Ascending aorta (tissue), 2 donors: ENCODE measurements at regions of chr1 and their contacts with region 1.

Region 1: GRCh38 chr1:222814536-222815439 is at the start of gene DISP1:
- DNase-seq: peak in 1 of 2 donors; percentile 91
- H3K4me3 ChIP-seq: peak within 1 kb of the TSS; percentile 61 to 95
- H3K27ac ChIP-seq: peak within 1 kb of the TSS; percentile 91 to 100
- H3K4me1 ChIP-seq: peaks cover 4 to 13% of the 10 kb centered on the region in 2 donors
- H3K27me3 ChIP-seq: no peaks in the 10 kb centered on the region
- CTCF ChIP-seq: no peak
- total RNA-seq, gene DISP1: 23.2 TPM

Region 2: DNA sequence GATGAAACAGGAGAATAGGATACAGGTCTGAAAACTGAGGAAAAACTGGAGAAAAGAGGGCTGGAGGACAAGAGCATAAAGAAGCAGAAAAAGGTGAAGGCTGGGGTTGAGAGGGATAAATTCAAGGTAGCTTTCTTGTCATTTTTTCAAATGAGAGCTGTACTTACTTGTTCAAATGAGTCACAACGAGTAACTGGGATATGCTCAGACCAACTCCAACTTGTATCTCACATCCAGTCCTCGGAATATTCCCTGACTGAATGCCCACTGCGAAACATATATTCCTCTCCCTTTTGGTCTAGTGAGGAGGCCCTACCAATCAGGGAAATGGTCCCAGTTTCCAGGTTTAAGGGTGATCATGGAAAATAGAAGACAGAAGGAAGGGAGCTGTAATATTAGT is 610.3 kb before region 1 on chr1:
- intact Hi-C with region 1: no loop called
- DNase-seq: no peak
- H3K4me3 ChIP-seq: no peak overlapping the region
- H3K27ac ChIP-seq: no peak overlapping the region
- H3K4me1 ChIP-seq: no peaks in the 10 kb centered on the region
- H3K27me3 ChIP-seq: no peaks in the 10 kb centered on the region
- CTCF ChIP-seq: no peak

Region 3: GRCh38 chr1:222713091-222713961 is 101.5 kb before region 1 on chr1:
- intact Hi-C with region 1: loop called (anchors 1 kb)
- DNase-seq: peak; percentile 87 to 96
- H3K4me3 ChIP-seq: peak overlapping the region; percentile 80 to 89
- H3K27ac ChIP-seq: peak overlapping the region; percentile 96 to 99
- H3K4me1 ChIP-seq: peaks cover 0 to 15% of the 10 kb centered on the region in 2 donors
- H3K27me3 ChIP-seq: no peaks in the 10 kb centered on the region
- CTCF ChIP-seq: no peak

Region 4: GRCh38 chr1:222754366-222755139 is 60.2 kb before region 1 on chr1:
- intact Hi-C with region 1: loop called (anchors 2 kb)
- DNase-seq: peak; percentile 53 to 81
- H3K4me3 ChIP-seq: peak overlapping the region in 1 of 2 donors; percentile 28
- H3K27ac ChIP-seq: peak overlapping the region; percentile 64 to 77
- H3K4me1 ChIP-seq: peaks cover 0 to 4% of the 10 kb centered on the region in 2 donors
- H3K27me3 ChIP-seq: no peaks in the 10 kb centered on the region
- CTCF ChIP-seq: no peak

Region 5: DNA sequence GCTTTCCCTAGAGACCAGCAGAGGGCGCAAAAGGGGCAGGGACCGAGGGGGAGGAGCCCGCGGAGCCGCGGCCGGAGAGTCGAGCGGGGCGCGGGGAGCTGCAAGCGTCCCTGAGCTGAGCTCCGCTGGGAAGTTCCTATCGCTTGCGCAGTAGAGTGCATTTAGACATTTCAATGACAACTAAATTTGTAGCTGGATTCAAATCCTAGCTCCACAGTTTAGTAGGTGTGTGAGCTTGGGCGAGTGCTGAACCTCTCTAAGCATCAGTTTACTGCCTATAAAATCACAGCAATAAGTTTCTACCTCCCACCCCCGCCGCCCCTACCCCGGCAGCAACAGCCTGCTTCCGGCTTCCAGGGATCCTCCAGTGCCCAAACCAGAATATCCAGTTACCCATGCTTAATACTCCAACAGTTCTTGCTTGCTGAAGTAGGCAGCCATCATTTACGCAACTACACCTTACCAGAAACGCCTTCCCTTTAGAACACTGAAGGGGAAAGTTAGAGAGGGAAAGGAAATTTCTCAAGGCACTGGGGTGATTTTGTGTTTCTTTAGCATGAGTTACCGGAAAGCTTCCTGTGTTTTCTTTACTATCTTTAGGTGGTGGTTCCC is 319.1 kb after region 1 on chr1:
- intact Hi-C with region 1: loop called (anchors 5 kb)
- DNase-seq: peak in 1 of 2 donors; percentile 92
- H3K4me3 ChIP-seq: peak overlapping the region; percentile 48 to 56
- H3K27ac ChIP-seq: peak overlapping the region; percentile 60 to 64
- H3K4me1 ChIP-seq: peaks cover 7 to 12% of the 10 kb centered on the region in 2 donors
- H3K27me3 ChIP-seq: no peaks in the 10 kb centered on the region
- CTCF ChIP-seq: peak; percentile 84 to 97 (median 97)

Region 6: GRCh38 chr1:223845810-223846682 is 1031.3 kb after region 1 on chr1 and contains the start of gene TP53BP2:
- intact Hi-C with region 1: loop called (anchors 10 kb)
- DNase-seq: peak; percentile 43 to 92
- H3K4me3 ChIP-seq: peak within 1 kb of the TSS; percentile 93 to 95
- H3K27ac ChIP-seq: peak within 1 kb of the TSS; percentile 100
- H3K4me1 ChIP-seq: peaks cover 2 to 22% of the 10 kb centered on the region in 2 donors
- H3K27me3 ChIP-seq: no peaks in the 10 kb centered on the region
- CTCF ChIP-seq: peak; percentile 54 to 87 (median 84)
- total RNA-seq, gene TP53BP2: 162 TPM